Activated CD4-positive, alpha-beta memory T cell treated with anti-CD3 and anti-CD28 coated beads for 36 hours (primary cell): ENCODE measurements at regions of chr15 and their contacts with region 1.

Region 1: GRCh38 chr15:67468416-67468815 is 52.5 kb upstream of the C15orf61 start:
- DNase-seq: no peak
- H3K4me3 Mint-ChIP-seq: no peak overlapping the region
- H3K27ac Mint-ChIP-seq: no peak overlapping the region
- H3K4me1 Mint-ChIP-seq: no peaks in the 10 kb centered on the region
- H3K27me3 Mint-ChIP-seq: no peaks in the 10 kb centered on the region

Region 2: GRCh38 chr15:67456677-67457529 is 11.5 kb before region 1 on chr15:
- CTCF ChIA-PET with region 1: interaction called, 22 read pairs
- POLR2A ChIA-PET with region 1: interaction called, 3 read pairs
- intact Hi-C with region 1: no loop called
- DNase-seq: peak; percentile 87
- H3K4me3 Mint-ChIP-seq: no peak overlapping the region
- H3K27ac Mint-ChIP-seq: no peak overlapping the region
- H3K4me1 Mint-ChIP-seq: peaks cover 2% of the 10 kb centered on the region
- H3K27me3 Mint-ChIP-seq: peaks cover 3% of the 10 kb centered on the region

Region 3: GRCh38 chr15:67542420-67543347 is 74.3 kb after region 1 on chr15 and contains the start of gene MAP2K5:
- CTCF ChIA-PET with region 1: no interaction called
- POLR2A ChIA-PET with region 1: no interaction called
- intact Hi-C with region 1: no loop called
- DNase-seq: peak; percentile 86
- H3K4me3 Mint-ChIP-seq: peak within 1 kb of the TSS; percentile 93
- H3K27ac Mint-ChIP-seq: peak within 1 kb of the TSS; percentile 93
- H3K4me1 Mint-ChIP-seq: peaks cover 43% of the 10 kb centered on the region
- H3K27me3 Mint-ChIP-seq: no peaks in the 10 kb centered on the region
- total RNA-seq, gene MAP2K5: 16.5 to 17.4 TPM